Calu3 (cell line): ENCODE measurements at regions of chr16 and their contacts with region 1.

Region 1: DNA sequence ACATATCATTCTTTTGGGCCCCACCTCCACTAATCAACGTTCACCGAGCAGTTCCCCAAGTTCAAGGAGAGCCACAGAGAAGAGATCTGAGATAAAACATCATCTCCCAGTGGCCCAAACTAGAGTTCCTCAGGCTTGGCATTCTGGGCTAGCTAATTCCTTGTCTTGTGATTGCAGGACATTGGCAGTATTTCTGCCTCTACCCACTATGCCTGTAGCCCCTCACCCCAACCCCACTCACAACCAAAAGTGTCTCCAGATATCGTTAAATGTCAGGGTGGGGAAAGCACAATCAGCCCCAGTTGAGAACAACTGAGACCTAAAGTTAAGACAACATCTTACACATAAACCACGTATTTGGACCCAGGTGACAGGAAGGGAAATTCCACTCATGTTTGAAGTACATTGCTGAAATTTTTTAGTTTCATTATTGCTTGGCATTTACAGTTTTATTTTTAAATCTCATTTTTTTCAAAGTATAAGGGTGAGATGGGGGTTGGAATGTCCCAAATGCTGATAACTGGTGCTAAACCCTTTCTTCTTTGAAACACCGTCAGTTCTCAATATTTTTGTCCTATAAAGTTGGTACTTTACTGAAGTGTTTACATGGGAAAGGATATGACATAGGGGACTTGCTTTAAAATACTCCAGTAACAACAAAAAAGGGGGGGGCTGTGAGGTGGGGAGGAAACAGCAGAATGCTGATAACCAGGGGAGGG is 13.6 kb downstream of the ZC3H7A start:
- DNase-seq: peak; percentile 18
- H3K4me3 Mint-ChIP-seq: peak overlapping the region; percentile 38
- H3K27ac Mint-ChIP-seq: peak overlapping the region; percentile 89
- H3K4me1 Mint-ChIP-seq: peaks cover 52% of the 10 kb centered on the region
- H3K27me3 Mint-ChIP-seq: no peaks in the 10 kb centered on the region
- CTCF ChIP-seq: no peak

Region 2: DNA sequence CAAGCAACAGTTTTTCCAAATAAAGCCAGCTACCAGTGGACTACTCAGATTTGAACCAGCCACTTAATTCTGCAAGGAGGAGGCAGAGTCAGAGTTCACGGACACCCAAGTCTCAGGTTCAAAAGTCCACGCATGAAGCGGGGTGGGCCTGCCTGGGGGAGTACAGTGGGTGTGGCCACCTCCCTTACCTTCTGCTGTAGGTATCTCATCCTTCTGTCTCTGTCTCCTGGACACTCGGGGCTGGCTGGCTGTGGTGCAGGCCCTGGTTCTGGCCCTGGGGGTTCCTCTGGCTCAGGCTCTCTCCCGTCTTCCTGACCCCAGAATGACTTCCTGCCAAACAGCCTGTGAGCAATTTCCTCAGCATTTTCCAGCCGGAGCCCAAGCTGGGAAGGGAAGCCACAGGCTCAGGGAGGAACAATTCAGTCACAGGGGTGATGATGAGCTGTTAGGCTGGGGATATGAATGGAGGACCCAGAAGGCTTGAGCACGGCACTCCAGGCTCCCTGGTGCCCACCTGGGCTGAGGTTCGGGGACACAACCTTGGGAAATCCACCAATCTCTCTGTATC is 298.7 kb before region 1 on chr16:
- CTCF ChIA-PET with region 1: no interaction called
- intact Hi-C with region 1: no loop called
- DNase-seq: no peak
- H3K4me3 Mint-ChIP-seq: no peak overlapping the region
- H3K27ac Mint-ChIP-seq: no peak overlapping the region
- H3K4me1 Mint-ChIP-seq: no peaks in the 10 kb centered on the region
- H3K27me3 Mint-ChIP-seq: no peaks in the 10 kb centered on the region
- CTCF ChIP-seq: no peak

Region 3: GRCh38 chr16:11698271-11698689 is 85.2 kb before region 1 on chr16:
- CTCF ChIA-PET with region 1: interaction called, 15 read pairs
- intact Hi-C with region 1: no loop called
- DNase-seq: no peak
- H3K4me3 Mint-ChIP-seq: no peak overlapping the region
- H3K27ac Mint-ChIP-seq: no peak overlapping the region
- H3K4me1 Mint-ChIP-seq: no peaks in the 10 kb centered on the region
- H3K27me3 Mint-ChIP-seq: no peaks in the 10 kb centered on the region
- CTCF ChIP-seq: no peak

Region 4: GRCh38 chr16:11742539-11743307 is 40.8 kb before region 1 on chr16 and contains the start of gene TXNDC11:
- CTCF ChIA-PET with region 1: no interaction called
- intact Hi-C with region 1: loop called (anchors 1 kb)
- DNase-seq: peak; percentile 100
- H3K4me3 Mint-ChIP-seq: peak within 1 kb of the TSS; percentile 85
- H3K27ac Mint-ChIP-seq: peak within 1 kb of the TSS; percentile 98
- H3K4me1 Mint-ChIP-seq: peaks cover 48% of the 10 kb centered on the region
- H3K27me3 Mint-ChIP-seq: no peaks in the 10 kb centered on the region
- CTCF ChIP-seq: no peak
- total RNA-seq, gene TXNDC11: 51.3 and 52.1 TPM in 2 replicates

Region 5: GRCh38 chr16:11797166-11797956 is 13.9 kb after region 1 on chr16 and contains the start of gene ZC3H7A:
- CTCF ChIA-PET with region 1: interaction called, 10 read pairs
- intact Hi-C with region 1: loop called (anchors 1 kb)
- DNase-seq: peak; percentile 99
- H3K4me3 Mint-ChIP-seq: peak within 1 kb of the TSS; percentile 76
- H3K27ac Mint-ChIP-seq: peak within 1 kb of the TSS; percentile 56
- H3K4me1 Mint-ChIP-seq: peaks cover 48% of the 10 kb centered on the region
- H3K27me3 Mint-ChIP-seq: no peaks in the 10 kb centered on the region
- CTCF ChIP-seq: peak; percentile 91
- total RNA-seq, gene ZC3H7A: 68.7 and 70.9 TPM in 2 replicates